ENCODE measurements at regions of chr16 and their contacts with region 1.

Region 1: GRCh38 chr16:589658-590159 is at the start of gene RAB40C:
- DNase-seq: peak; percentile 99
- H3K4me3 ChIP-seq: peak within 1 kb of the TSS; percentile 52 to 89
- H3K4me3 Mint-ChIP-seq: peak within 1 kb of the TSS; percentile 93 to 100 (median 99)
- H3K27ac ChIP-seq: peak within 1 kb of the TSS; percentile 85
- H3K27ac Mint-ChIP-seq: peak within 1 kb of the TSS; percentile 91 to 100 (median 99)
- H3K4me1 ChIP-seq: peaks cover 27% of the 10 kb centered on the region
- H3K4me1 Mint-ChIP-seq: peaks cover 16 to 54% (median 33%) of the 10 kb centered on the region in 4 donors
- H3K27me3 ChIP-seq: no peaks in the 10 kb centered on the region
- H3K27me3 Mint-ChIP-seq: no peaks in the 10 kb centered on the region
- total RNA-seq, gene RAB40C: 22.0 to 25.6 TPM

Region 2: DNA sequence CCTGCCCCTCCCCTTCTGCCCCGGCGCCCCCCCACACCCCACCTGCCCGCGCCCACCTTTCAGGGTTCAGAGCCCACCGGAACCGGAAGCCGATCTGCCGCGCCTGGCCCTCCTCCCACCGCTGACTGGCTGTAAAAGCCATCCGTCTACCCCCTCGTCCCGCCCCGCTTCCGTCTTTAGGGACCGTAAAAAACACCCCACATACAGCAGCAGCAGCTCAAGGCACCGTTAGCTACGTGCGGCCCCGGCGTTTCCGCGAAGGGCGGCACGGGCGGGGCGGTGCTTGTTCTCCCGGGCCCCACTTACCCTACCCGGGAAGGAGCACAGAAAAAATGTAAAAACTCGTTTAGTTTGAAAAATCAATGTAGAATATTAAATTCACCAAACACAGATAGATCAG is 219.3 kb before region 1 on chr16 and contains the start of gene MRPL28:
- CTCF ChIA-PET with region 1: no interaction called
- POLR2A ChIA-PET with region 1: no interaction called
- intact Hi-C with region 1: loop called (anchors 10 kb)
- DNase-seq: peak; percentile 90 to 95 (median 91)
- H3K4me3 ChIP-seq: peak within 1 kb of the TSS in 1 of 2 donors; percentile 19
- H3K4me3 Mint-ChIP-seq: peak within 1 kb of the TSS; percentile 81 to 96 (median 92)
- H3K27ac ChIP-seq: peak within 1 kb of the TSS; percentile 42
- H3K27ac Mint-ChIP-seq: peak within 1 kb of the TSS; percentile 73 to 95 (median 94)
- H3K4me1 ChIP-seq: peaks cover 26% of the 10 kb centered on the region
- H3K4me1 Mint-ChIP-seq: peaks cover 3 to 20% (median 13%) of the 10 kb centered on the region in 4 donors
- H3K27me3 ChIP-seq: no peaks in the 10 kb centered on the region
- H3K27me3 Mint-ChIP-seq: no peaks in the 10 kb centered on the region
- total RNA-seq, gene MRPL28: 27.9 to 29.2 TPM

Region 3: DNA sequence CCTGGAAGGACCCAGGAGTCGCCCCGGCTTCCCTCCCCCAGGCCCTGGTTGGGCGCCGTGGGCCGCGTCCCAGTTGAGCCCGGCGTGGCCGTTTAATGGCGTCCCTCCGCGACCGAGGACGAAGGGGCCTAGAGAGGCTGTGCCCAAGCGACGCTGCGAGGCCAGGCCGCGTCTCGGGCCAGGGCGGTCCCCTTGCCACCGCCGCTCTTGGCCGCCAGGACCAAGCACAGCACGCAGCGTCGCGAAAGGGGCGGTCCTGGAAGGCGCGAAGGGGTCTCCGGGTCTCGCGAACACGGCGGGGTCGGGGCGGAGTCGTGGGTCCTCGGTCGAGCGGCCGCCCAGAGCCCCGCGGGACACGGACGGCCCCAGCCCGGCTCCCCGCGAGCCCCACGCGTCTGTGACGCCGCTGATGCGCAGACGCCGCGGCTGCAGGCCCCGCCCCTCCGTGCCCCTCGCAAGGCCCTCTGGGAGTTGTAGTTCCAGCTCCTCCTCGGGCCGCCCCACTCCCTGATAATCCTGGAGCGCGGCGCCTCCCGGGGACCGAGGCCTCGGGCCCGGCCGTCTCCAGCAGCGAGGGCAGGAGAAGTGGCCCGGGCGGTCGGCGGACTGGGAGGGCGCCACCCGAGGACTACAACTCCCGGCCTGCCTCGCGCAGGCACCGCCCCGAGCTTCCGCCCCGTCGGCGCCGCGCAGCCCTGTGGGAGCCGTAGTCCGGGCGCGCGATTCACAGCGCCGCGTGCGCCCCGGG is 62.5 kb before region 1 on chr16 and contains the start of gene CAPN15:
- CTCF ChIA-PET with region 1: no interaction called
- POLR2A ChIA-PET with region 1: interaction called, 5 read pairs
- intact Hi-C with region 1: loop called (anchors 1 kb)
- DNase-seq: peak; percentile 82 to 92 (median 89)
- H3K4me3 ChIP-seq: peak within 1 kb of the TSS; percentile 50 to 81
- H3K4me3 Mint-ChIP-seq: peak within 1 kb of the TSS; percentile 90 to 95 (median 92)
- H3K27ac ChIP-seq: peak within 1 kb of the TSS; percentile 89
- H3K27ac Mint-ChIP-seq: peak within 1 kb of the TSS; percentile 86 to 95 (median 93)
- H3K4me1 ChIP-seq: peaks cover 43% of the 10 kb centered on the region
- H3K4me1 Mint-ChIP-seq: peaks cover 16 to 44% (median 29%) of the 10 kb centered on the region in 4 donors
- H3K27me3 ChIP-seq: no peaks in the 10 kb centered on the region
- H3K27me3 Mint-ChIP-seq: no peaks in the 10 kb centered on the region
- total RNA-seq, gene CAPN15: 74.0 to 77.4 TPM

Region 4: DNA sequence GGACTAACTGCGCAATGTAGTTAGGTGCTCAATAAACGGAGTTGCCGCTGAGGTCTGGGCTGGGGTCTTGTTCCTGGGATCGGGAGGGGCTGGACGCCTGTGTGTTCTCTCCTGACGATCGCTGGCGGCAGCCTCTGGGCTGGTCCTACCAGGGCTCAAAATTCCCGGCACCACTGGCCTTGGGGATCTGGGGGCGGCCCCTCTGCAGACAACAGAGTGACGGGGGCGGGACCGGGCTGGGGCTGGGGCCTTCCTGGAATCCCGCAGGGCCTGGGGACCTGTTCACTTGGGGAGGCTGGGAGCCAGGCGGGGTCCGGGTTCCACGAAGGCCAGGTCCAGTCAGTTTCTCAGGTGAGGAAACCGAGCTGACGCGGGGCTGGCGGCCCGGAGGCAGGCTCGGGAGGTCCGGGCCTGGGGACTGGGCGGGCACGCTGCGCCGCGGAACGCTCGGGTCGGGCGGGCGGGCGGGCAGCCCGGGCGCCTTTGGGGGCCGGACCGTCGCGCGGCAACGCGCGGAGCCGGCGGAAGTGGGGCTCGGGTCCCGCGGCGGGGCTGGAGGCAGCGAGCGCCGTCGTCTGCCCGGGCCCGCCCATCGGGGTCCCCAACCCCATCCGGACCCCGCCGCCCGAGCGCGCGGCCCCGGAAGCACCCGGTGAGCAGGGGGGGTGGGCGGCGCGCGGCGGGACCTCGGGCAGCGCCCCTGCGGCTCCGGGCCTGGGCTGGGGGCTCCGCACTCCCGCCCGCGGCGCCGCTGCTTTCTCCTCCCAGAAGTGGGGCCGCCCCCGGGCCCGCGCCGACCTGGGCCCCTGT is 20.1 kb before region 1 on chr16 and contains the start of gene PIGQ:
- CTCF ChIA-PET with region 1: no interaction called
- POLR2A ChIA-PET with region 1: interaction called, 18 read pairs
- intact Hi-C with region 1: loop called (anchors 1 kb)
- DNase-seq: peak; percentile 65 to 71 (median 67)
- H3K4me3 ChIP-seq: peak within 1 kb of the TSS; percentile 52 to 64
- H3K4me3 Mint-ChIP-seq: peak within 1 kb of the TSS; percentile 84 to 92 (median 87)
- H3K27ac ChIP-seq: peak within 1 kb of the TSS; percentile 76
- H3K27ac Mint-ChIP-seq: peak within 1 kb of the TSS; percentile 88 to 96 (median 93)
- H3K4me1 ChIP-seq: peaks cover 37% of the 10 kb centered on the region
- H3K4me1 Mint-ChIP-seq: peaks cover 25 to 39% (median 32%) of the 10 kb centered on the region in 4 donors
- H3K27me3 ChIP-seq: no peaks in the 10 kb centered on the region
- H3K27me3 Mint-ChIP-seq: no peaks in the 10 kb centered on the region
- total RNA-seq, gene PIGQ: 61.4 to 63.3 TPM

Region 5: DNA sequence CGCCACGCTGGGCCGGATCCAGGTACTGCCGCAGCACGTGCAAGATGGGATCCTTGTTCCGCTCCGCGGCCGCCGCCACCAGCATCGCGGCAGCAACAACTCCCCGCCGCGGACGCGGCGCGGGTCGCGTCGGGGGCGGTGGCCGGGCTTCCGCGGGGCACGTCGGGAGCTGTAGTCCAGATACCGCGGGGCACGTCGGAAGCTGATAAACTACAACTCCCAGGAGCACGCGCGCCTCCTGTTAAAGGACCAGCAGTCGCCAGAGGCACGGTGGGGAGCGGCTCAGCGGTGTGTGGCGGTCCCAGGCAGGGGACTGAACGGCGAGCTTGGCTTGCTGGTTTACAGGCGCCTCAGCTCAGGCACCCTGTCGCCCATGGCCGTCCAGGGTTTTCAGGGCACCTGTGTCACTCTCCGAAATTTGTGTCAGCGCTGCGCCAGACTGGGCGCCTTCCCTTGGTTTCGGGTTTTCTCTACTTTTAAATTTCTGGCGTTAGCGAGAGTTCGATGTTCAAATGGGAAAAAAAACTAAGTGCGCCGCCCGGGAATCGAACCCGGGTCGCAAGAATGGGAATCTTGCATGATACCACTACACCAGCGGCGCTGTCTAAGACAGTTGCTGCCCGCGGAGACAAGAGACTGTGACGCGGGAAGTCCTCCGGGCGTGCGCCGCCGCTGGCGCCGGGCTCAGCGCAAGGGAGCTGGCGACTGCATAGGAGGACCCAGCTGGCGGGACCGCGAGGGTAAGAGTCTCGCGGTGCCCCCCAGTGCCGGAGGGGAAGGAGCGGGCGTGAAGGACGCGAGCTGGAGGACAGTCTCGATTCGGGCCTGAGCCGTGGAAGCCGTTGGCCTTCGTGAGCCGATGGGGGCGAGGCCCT is 46.7 kb after region 1 on chr16 and contains the start of gene METTL26:
- CTCF ChIA-PET with region 1: no interaction called
- POLR2A ChIA-PET with region 1: interaction called, 18 read pairs
- intact Hi-C with region 1: loop called (anchors 1 kb)
- DNase-seq: peak; percentile 92 to 95 (median 93)
- H3K4me3 ChIP-seq: peak within 1 kb of the TSS; percentile 81 to 86
- H3K4me3 Mint-ChIP-seq: peak within 1 kb of the TSS; percentile 95 to 100 (median 98)
- H3K27ac ChIP-seq: peak within 1 kb of the TSS; percentile 76
- H3K27ac Mint-ChIP-seq: peak within 1 kb of the TSS; percentile 94 to 100 (median 99)
- H3K4me1 ChIP-seq: peaks cover 21% of the 10 kb centered on the region
- H3K4me1 Mint-ChIP-seq: peaks cover 0 to 10% (median 5%) of the 10 kb centered on the region in 4 donors
- H3K27me3 ChIP-seq: no peaks in the 10 kb centered on the region
- H3K27me3 Mint-ChIP-seq: peaks cover 0 to 3% of the 10 kb centered on the region in 2 donors
- total RNA-seq, gene METTL26: 68.4 to 74.1 TPM

Region 6: DNA sequence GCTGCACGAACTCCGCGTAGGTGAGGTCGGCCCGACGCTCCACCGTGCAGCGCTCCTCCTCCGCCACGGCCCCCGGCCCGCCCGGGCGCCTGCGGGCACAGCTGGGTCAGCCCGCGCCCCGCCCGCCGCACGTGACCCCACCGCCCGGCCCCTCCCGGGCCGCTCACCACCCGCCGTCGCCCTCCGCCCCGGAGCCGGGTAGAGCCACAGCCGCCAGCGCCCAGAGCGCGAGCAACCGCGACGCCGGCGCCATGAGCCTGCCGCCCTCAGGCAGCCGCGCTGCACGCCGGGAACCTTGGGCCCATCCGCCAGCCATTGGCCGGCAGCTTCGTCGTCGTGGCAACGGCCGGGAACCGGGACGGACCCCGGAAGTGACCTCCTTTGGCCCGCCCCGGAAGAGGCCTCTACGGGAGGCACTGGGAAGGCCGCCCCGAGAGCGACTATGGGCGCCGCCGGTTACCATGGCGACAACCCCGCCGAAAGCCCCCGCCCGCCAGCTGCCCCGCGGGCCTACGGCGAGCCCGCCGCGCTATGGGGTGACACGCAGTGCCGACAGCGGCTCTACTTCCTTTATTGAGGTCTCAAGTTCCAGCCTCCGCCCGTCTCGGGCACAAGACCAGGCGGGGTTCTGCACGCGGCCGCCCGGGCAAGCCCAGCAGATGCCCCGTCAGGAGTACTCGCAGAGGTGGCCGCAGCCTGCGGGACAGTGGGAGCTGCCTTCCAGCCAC is 94.5 kb after region 1 on chr16 and contains the start of gene JMJD8:
- CTCF ChIA-PET with region 1: no interaction called
- POLR2A ChIA-PET with region 1: interaction called, 4 read pairs
- intact Hi-C with region 1: loop called (anchors 2 kb)
- DNase-seq: peak; percentile 93 to 96 (median 94)
- H3K4me3 ChIP-seq: peak within 1 kb of the TSS in 1 of 2 donors; percentile 62
- H3K4me3 Mint-ChIP-seq: peak within 1 kb of the TSS; percentile 66 to 86 (median 77)
- H3K27ac ChIP-seq: peak within 1 kb of the TSS; percentile 70
- H3K27ac Mint-ChIP-seq: peak within 1 kb of the TSS; percentile 42 to 91 (median 85)
- H3K4me1 ChIP-seq: peaks cover 58% of the 10 kb centered on the region
- H3K4me1 Mint-ChIP-seq: peaks cover 6 to 44% (median 27%) of the 10 kb centered on the region in 4 donors
- H3K27me3 ChIP-seq: no peaks in the 10 kb centered on the region
- H3K27me3 Mint-ChIP-seq: no peaks in the 10 kb centered on the region
- total RNA-seq, gene JMJD8: 45.0 to 49.0 TPM

Region 7: GRCh38 chr16:970766-971581 is 381.3 kb after region 1 on chr16 and contains the start of gene LMF1:
- CTCF ChIA-PET with region 1: no interaction called
- POLR2A ChIA-PET with region 1: no interaction called
- intact Hi-C with region 1: loop called (anchors 2 kb)
- DNase-seq: peak; percentile 92 to 100 (median 93)
- H3K4me3 ChIP-seq: peak within 1 kb of the TSS; percentile 23 to 82
- H3K4me3 Mint-ChIP-seq: peak within 1 kb of the TSS; percentile 67 to 90 (median 76)
- H3K27ac ChIP-seq: peak within 1 kb of the TSS; percentile 81
- H3K27ac Mint-ChIP-seq: peak within 1 kb of the TSS; percentile 28 to 89 (median 71)
- H3K4me1 ChIP-seq: peaks cover 16% of the 10 kb centered on the region
- H3K4me1 Mint-ChIP-seq: peaks cover 12 to 30% (median 21%) of the 10 kb centered on the region in 4 donors
- H3K27me3 ChIP-seq: no peaks in the 10 kb centered on the region
- H3K27me3 Mint-ChIP-seq: no peaks in the 10 kb centered on the region
- total RNA-seq, gene LMF1: 50.0 to 59.7 TPM